Posterior cingulate gyrus (tissue), 11 donors: ENCODE measurements at regions of chr2 and their contacts with region 1.

Region 1: GRCh38 chr2:135531231-135532228 is at the start of gene R3HDM1:
- DNase-seq: peak; percentile 92 to 99 (median 96)

Region 2: GRCh38 chr2:135052042-135052876 is 479.3 kb before region 1 on chr2 and contains the start of gene RAB3GAP1:
- intact Hi-C with region 1: loop called (anchors 5 kb)
- DNase-seq: peak; percentile 39 to 94 (median 64)